ENCODE measurements at regions of chr2 and their contacts with region 1.

Region 1: DNA sequence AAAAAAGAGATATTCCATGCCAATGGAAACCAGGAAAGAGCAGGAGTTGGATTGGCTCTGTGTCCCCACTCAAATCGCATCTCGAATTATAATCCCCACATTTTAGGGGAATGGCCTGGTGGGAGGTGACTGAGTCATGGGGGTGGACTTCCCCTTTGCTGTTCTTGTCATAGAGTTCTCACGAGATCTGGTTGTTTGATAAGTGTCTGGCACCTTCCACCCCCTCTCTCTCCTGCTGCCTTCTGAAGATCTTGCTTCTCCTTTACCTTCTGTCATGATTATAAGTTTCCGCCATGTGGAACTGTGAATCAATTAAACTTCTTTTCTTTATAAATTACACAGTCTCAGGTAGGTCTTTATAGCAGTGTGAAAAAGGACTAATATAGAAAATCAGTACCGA is 355.6 kb downstream of the NBAS start:
- DNase-seq: no peak

Region 2: DNA sequence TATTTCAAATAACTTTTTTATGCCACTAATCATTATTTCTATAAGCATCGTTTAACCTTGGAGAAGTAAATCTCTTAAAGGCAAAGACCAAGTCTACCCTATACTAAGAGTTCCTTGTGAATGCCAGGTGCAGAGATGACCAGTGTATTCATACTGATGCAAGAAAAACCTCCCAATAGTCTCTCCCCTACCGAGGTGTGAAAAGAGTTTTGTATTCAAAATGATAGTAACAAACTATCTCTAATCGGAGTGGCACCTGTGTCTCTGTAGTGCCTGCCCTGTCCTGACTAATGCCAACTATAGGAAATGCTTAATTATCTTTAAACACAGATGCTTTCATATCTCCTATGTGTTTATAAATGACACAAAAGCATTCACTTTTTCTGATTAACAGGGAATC is 1690.3 kb before region 1 on chr2:
- intact Hi-C with region 1: no loop called
- DNase-seq: no peak

Region 3: DNA sequence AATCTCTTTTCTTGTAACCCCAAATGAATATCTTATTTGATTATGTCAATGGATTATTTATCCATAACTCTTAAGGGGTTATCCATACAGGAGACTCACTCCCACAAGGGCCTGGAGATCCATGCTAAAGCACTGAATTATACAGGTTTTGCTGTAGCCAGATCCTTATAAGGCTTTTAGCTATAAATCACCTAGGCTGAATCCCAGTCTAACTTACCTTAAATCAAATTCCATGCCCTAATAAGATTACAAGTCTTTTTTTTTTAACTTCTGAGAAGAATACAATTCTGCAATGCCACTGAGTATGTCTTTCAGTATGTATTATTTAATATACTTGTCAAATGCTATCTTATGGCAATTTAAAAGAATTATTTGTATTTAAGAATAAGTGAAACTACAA is 15.0 kb after region 1 on chr2:
- intact Hi-C with region 1: loop called in 1 of 2 experiments (anchors 1 kb)
- DNase-seq: no peak

Measured in posterior vena cava (tissue), 2 donors.